A549 (cell line): ENCODE measurements at regions of chr2 and their contacts with region 1.

Region 1: DNA sequence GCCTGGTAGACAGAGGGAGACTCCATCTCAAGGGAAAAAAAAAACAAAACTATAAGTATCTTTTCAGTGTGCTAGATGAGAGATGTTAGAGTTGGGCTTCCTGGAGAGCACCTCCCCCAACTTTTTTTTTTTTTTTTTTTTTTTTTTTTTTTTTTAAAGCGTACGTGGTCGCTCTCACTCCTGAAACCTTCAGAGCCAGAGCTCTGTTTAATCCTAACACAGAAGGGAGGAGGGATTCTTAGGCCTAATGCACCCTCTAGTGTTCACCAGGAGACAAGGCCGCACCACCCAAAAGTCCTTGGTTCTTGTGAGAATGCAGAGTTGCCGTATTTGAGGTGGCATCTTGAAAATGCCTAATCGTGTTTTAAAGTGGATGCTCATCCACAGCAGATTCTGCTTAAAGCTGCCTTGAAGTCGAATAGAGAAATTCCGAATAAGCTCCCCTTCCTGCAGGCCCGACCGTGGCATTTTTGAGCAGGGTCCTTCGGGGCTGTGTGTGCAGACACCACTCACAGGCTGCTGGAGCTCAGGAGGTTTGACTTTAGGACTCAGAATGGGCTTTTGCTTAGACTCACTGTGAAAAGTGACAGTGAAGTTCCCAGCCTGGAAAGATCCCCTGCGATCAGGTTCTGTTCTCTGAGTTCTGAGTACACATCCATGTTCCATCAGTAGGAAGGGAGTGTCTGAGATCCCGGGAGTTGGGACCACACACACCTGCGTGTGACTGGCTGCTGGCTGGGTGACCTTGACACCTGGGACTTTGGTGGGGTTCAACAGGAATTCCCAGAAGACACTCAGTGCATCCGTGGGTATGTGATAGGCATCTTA is 252.6 kb downstream of the AGAP1 start:
- DNase-seq: peak; percentile 76 to 90
- ATAC-seq: peak; percentile 96 to 99
- H3K4me3 ChIP-seq: no peak overlapping the region
- H3K27ac ChIP-seq: no peak overlapping the region
- H3K4me1 ChIP-seq: no peaks in the 10 kb centered on the region; the same call in 2 of the 3 replicates
- CTCF ChIP-seq: peak; percentile 80
- EP300 ChIP-seq: no peak
- POLR2A ChIP-seq: no peak
- RAD21 ChIP-seq: peak; percentile 86

Region 2: DNA sequence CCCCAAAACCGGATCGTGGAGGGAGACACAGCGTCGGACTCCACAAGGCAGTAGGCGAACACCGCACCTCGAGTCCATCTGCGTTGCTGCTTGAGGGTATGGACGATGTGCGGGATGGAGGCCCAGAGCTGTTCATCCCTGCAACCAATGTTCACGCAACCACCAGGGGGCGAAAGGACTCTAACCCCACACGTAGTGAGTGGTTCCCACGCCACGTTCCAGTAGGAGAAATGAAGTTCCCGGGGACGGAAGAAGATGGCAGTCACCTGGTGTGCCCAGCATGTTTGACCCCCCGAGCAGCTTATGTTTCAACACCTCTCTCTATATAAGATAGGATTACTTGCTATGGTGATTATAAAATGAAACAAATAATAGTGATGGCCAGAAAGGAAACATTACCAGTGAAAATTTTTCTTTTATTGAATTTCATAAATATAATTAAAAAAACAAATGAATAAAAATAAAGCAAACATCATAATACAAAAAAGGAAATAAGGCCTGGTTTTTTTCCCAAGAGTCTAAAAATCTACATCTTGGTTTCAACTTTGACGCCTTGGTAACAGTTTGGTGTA is 610.4 kb before region 1 on chr2:
- CTCF ChIA-PET with region 1: interaction called, 23 read pairs
- POLR2A ChIA-PET with region 1: no interaction called
- DNase-seq: peak; percentile 78 to 90
- ATAC-seq: peak; percentile 97 to 99
- H3K4me3 ChIP-seq: no peak overlapping the region
- H3K27ac ChIP-seq: peak overlapping the region; percentile 47 to 57; a peak in 4 of 6 replicates
- H3K4me1 ChIP-seq: peaks cover 7% of the 10 kb centered on the region; the same call in 2 of the 3 replicates
- CTCF ChIP-seq: peak; percentile 81
- EP300 ChIP-seq: no peak
- POLR2A ChIP-seq: no peak
- RAD21 ChIP-seq: peak; percentile 92 to 95

Region 3: GRCh38 chr2:235493402-235493774 is 253.1 kb before region 1 on chr2:
- CTCF ChIA-PET with region 1: no interaction called
- POLR2A ChIA-PET with region 1: no interaction called
- DNase-seq: peak in 1 of 2 experiments; percentile 43
- ATAC-seq: peak; percentile 44 to 50
- H3K4me3 ChIP-seq: peak overlapping the region; percentile 93
- H3K27ac ChIP-seq: peak overlapping the region; percentile 98 to 99
- H3K4me1 ChIP-seq: peaks cover 29% of the 10 kb centered on the region
- CTCF ChIP-seq: no peak; the same call in 2 of the 3 replicates
- EP300 ChIP-seq: no peak
- POLR2A ChIP-seq: 0 out of 2 replicates have a peak, but pooled peaks have one; percentile 2
- RAD21 ChIP-seq: no peak

Region 4: DNA sequence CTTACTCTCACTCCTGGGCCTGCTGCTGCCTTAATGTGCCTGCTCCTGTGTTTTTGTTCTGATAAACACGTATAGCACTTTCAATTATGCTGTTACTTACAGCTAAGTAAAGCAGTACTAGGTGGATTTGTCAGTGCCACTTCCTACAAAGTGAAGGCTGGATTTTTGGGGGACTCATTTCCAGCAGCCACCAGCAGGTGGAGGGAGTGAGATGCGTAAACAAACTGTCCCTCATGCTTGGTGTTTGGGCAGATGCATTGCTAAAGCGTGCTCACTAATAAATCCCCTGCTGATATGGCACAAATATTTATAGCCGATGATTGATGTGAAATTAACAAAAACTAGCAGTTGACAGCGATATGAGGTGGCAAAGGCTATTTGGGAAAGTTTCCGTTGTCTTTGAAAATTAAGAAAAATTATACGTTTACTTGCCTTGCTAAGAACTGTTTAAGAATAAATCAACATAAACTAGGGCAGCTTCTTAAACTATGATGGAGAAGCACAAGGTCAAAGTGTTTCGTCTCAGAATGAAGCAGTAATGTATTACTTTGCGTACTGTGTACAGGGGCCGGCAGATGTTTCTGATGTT is 151.0 kb before region 1 on chr2:
- CTCF ChIA-PET with region 1: interaction called, 190 read pairs
- POLR2A ChIA-PET with region 1: no interaction called
- DNase-seq: peak; percentile 56 to 75
- ATAC-seq: peak; percentile 79 to 82; a peak in 5 of 6 replicates
- H3K4me3 ChIP-seq: no peak overlapping the region
- H3K27ac ChIP-seq: peak overlapping the region in 1 of 2 experiments; percentile 18; a peak in 1 of 6 replicates
- H3K4me1 ChIP-seq: peaks cover 15% of the 10 kb centered on the region
- CTCF ChIP-seq: peak; percentile 85
- EP300 ChIP-seq: no peak
- POLR2A ChIP-seq: no peak
- RAD21 ChIP-seq: peak; percentile 72 to 78

Region 5: GRCh38 chr2:235626657-235627056 is 119.8 kb before region 1 on chr2:
- CTCF ChIA-PET with region 1: interaction called, 10 read pairs
- POLR2A ChIA-PET with region 1: no interaction called
- DNase-seq: no peak
- ATAC-seq: no peak
- H3K4me3 ChIP-seq: no peak overlapping the region
- H3K27ac ChIP-seq: no peak overlapping the region
- H3K4me1 ChIP-seq: no peaks in the 10 kb centered on the region
- CTCF ChIP-seq: no peak
- EP300 ChIP-seq: no peak
- POLR2A ChIP-seq: no peak
- RAD21 ChIP-seq: no peak

Region 6: GRCh38 chr2:235663875-235664274 is 82.6 kb before region 1 on chr2:
- CTCF ChIA-PET with region 1: interaction called, 15 read pairs
- POLR2A ChIA-PET with region 1: no interaction called
- DNase-seq: no peak
- ATAC-seq: no peak
- H3K4me3 ChIP-seq: no peak overlapping the region
- H3K27ac ChIP-seq: no peak overlapping the region
- H3K4me1 ChIP-seq: peaks cover 11% of the 10 kb centered on the region
- CTCF ChIP-seq: no peak
- EP300 ChIP-seq: no peak
- POLR2A ChIP-seq: no peak
- RAD21 ChIP-seq: no peak

Region 7: GRCh38 chr2:235685024-235685721 is 61.3 kb before region 1 on chr2:
- CTCF ChIA-PET with region 1: interaction called, 10 read pairs
- POLR2A ChIA-PET with region 1: no interaction called
- DNase-seq: no peak
- ATAC-seq: no peak
- H3K4me3 ChIP-seq: no peak overlapping the region
- H3K27ac ChIP-seq: no peak overlapping the region
- H3K4me1 ChIP-seq: no peaks in the 10 kb centered on the region
- CTCF ChIP-seq: no peak
- EP300 ChIP-seq: no peak
- POLR2A ChIP-seq: no peak
- RAD21 ChIP-seq: no peak

Region 8: GRCh38 chr2:235734688-235735231 is 11.7 kb before region 1 on chr2:
- CTCF ChIA-PET with region 1: interaction called, 31 read pairs
- POLR2A ChIA-PET with region 1: no interaction called
- DNase-seq: no peak
- ATAC-seq: no peak
- H3K4me3 ChIP-seq: no peak overlapping the region
- H3K27ac ChIP-seq: no peak overlapping the region
- H3K4me1 ChIP-seq: no peaks in the 10 kb centered on the region
- CTCF ChIP-seq: no peak
- EP300 ChIP-seq: no peak
- POLR2A ChIP-seq: no peak
- RAD21 ChIP-seq: no peak